Breast epithelium (tissue), 4 donors: ENCODE measurements at regions of chr2 and their contacts with region 1.

Region 1: GRCh38 chr2:61689568-61689967 is 151.4 kb upstream of the XPO1 start:
- DNase-seq: no peak
- H3K4me3 ChIP-seq: peak overlapping the region in 1 of 3 donors; percentile 17
- H3K27ac ChIP-seq: peak overlapping the region; percentile 13 to 38
- H3K4me1 ChIP-seq: no peaks in the 10 kb centered on the region
- H3K27me3 ChIP-seq: no peaks in the 10 kb centered on the region
- CTCF ChIP-seq: no peak
- POLR2A ChIP-seq: no peak

Region 2: GRCh38 chr2:61670591-61671501 is 18.7 kb before region 1 on chr2:
- intact Hi-C with region 1: loop called (anchors 2 kb)
- DNase-seq: no peak
- H3K4me3 ChIP-seq: peak overlapping the region; percentile 26 to 48 (median 28)
- H3K27ac ChIP-seq: peak overlapping the region; percentile 82 to 83
- H3K4me1 ChIP-seq: no peaks in the 10 kb centered on the region
- H3K27me3 ChIP-seq: no peaks in the 10 kb centered on the region
- CTCF ChIP-seq: no peak
- POLR2A ChIP-seq: no peak

Region 3: DNA sequence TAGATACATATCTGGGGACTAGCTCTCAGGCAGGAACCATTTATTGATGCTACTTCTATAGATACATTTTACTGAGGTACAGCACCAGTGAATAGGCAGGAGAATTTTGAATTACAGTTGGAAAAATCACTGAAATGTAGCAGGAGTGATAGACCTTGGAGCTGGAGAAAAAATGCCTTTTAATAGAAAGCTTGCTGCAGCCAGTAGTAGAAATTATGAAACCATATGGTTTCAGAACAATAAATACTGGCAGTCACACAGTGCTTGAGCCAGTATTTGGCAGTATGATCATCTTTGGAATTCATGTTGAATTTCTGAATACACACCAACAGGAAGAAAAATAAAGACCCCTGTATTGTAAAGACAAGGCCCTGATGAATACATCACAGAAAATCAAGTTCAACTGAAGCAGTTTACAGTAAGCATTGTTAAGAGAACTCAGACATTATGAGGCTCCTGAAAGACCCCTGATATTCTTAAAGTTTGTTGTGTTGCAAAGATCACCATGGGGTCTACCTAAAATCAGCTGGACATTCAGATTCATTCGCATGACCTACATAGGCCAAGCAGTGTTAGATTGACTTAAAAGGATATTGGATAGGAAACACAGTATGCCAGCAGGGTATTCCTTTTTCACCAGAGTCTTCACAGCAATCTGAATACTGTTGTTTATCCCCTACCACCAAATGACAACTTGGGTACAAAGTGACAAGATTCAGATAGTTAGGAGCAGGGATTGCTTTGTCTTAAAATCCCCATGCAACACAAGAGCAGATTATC is 1154.9 kb after region 1 on chr2:
- intact Hi-C with region 1: no loop called
- DNase-seq: no peak
- H3K4me3 ChIP-seq: no peak overlapping the region
- H3K27ac ChIP-seq: no peak overlapping the region
- H3K4me1 ChIP-seq: no peaks in the 10 kb centered on the region
- H3K27me3 ChIP-seq: no peaks in the 10 kb centered on the region
- CTCF ChIP-seq: no peak
- POLR2A ChIP-seq: no peak